BJ (cell line): ENCODE measurements at regions of chr1 and their contacts with region 1.

Region 1: DNA sequence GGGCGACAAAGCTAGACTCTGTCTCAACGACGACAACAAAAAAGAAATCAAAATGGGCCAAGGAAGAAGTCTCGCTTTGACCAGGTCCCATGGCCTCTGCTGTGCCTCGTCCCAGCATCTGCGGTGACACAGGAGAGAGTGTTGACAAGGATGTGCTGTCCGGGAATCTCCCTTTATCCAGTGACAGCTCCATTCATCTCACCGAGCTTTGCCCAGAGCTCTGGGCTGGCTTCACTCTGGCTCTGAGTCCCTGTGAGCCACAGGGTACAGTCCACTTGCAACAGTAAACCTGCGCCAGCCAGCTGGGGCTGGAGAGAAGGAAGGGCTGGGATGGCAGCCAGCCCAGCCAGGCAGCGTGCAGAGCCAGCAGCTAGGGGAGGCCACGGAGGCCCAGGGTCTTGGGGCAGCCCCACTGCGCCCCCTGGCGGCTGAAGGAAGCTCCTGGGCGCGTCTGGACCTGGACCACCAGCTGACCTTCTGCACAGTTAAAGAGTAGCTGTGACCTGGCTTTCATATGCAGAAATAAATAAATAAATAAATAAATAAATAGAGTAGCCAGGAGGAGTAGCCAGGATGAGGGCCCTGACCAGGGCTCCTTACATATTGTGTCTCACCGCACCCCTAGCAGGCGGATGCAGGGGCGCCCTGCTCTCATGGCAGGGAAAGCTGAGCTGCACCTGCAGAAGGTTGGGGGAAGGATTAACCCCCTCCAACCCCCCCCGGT is 29.7 kb downstream of the ENO1 start:
- DNase-seq: peak; percentile 60
- H3K4me3 ChIP-seq: no peak overlapping the region
- H3K27me3 ChIP-seq: 0 out of 2 replicates have a peak, but pooled peaks cover 1% of the 10 kb centered on the region
- CTCF ChIP-seq: peak; percentile 97

Region 2: GRCh38 chr1:8831340-8831739 is 17.5 kb before region 1 on chr1:
- CTCF ChIA-PET with region 1: interaction called, 15 read pairs
- POLR2A ChIA-PET with region 1: no interaction called
- DNase-seq: no peak
- H3K4me3 ChIP-seq: no peak overlapping the region
- H3K27me3 ChIP-seq: no peaks in the 10 kb centered on the region; the same call in 1 of the 2 replicates
- CTCF ChIP-seq: peak; percentile 29

Region 3: DNA sequence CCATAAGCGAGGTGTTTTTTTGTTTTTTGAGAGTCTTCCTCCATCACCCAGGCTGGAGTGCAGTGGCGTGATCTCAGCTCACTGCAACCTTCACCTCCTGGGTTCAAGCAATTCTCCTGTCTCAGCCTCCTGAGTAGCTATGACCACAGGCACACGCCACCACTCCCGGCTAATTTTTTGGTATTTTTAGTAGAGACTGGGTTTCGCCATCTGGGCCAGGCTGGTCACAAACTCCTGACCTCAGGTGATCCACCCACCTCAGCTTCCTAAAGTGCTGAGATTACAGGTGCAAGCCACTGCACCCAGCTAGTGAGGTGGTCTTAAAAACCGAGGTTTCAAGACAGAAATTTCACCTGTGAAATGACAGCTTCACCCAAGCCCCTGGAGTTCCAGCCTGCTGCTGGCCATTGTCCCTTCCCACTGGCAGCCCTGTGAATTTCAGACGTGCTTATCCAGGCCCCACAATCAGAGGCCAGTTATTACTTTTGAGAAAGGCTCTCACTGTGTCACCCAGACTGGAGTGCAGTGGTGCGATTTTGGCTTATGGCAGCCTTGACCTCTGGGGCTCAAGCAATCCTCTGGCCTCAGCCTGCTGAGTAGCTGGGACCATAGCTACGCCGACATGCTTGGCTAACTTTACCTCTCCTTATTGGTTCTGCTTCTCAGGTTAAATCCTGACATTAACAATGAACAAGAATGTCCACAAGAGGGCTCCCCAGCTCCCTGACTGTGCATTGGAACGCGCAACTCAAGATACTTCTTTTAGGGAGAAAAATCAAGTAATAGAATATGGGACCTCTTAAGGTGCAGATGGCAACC is 10.3 kb after region 1 on chr1:
- CTCF ChIA-PET with region 1: interaction called, 49 read pairs
- POLR2A ChIA-PET with region 1: no interaction called
- DNase-seq: no peak
- H3K4me3 ChIP-seq: no peak overlapping the region
- H3K27me3 ChIP-seq: no peaks in the 10 kb centered on the region
- CTCF ChIP-seq: peak; percentile 63

Region 4: GRCh38 chr1:8962812-8963530 is 114.1 kb after region 1 on chr1:
- CTCF ChIA-PET with region 1: no interaction called
- POLR2A ChIA-PET with region 1: no interaction called
- DNase-seq: no peak
- H3K4me3 ChIP-seq: no peak overlapping the region
- H3K27me3 ChIP-seq: peaks cover 2% of the 10 kb centered on the region; the same call in 1 of the 2 replicates
- CTCF ChIP-seq: peak; percentile 63